CD4-positive, alpha-beta memory T cell (primary cell): ENCODE measurements at regions of chr17 and their contacts with region 1.

Region 1: GRCh38 chr17:72631949-72632684 is 460.4 kb downstream of the SLC39A11 start:
- DNase-seq: no peak
- H3K4me3 ChIP-seq: no peak overlapping the region
- H3K4me3 Mint-ChIP-seq: no peak overlapping the region
- H3K27ac ChIP-seq: no peak overlapping the region
- H3K27ac Mint-ChIP-seq: peak overlapping the region in 1 of 7 donors; percentile 69
- H3K4me1 ChIP-seq: peaks cover 22% of the 10 kb centered on the region
- H3K4me1 Mint-ChIP-seq: peaks cover 19 to 26% (median 20%) of the 10 kb centered on the region in 4 donors
- H3K27me3 ChIP-seq: no peaks in the 10 kb centered on the region
- H3K27me3 Mint-ChIP-seq: no peaks in the 10 kb centered on the region

Region 2: GRCh38 chr17:72592242-72592966 is 39.7 kb before region 1 on chr17:
- CTCF ChIA-PET with region 1: no interaction called
- POLR2A ChIA-PET with region 1: interaction called, 5 read pairs
- intact Hi-C with region 1: loop called (anchors 5 kb)
- DNase-seq: peak; percentile 58 to 75 (median 63)
- H3K4me3 ChIP-seq: peak overlapping the region; percentile 45 to 47
- H3K4me3 Mint-ChIP-seq: peak overlapping the region; percentile 88 to 95 (median 92)
- H3K27ac ChIP-seq: peak overlapping the region; percentile 38
- H3K27ac Mint-ChIP-seq: peak overlapping the region in 6 of 7 donors; percentile 23 to 93 (median 70)
- H3K4me1 ChIP-seq: peaks cover 27% of the 10 kb centered on the region
- H3K4me1 Mint-ChIP-seq: peaks cover 24 to 47% (median 34%) of the 10 kb centered on the region in 4 donors
- H3K27me3 ChIP-seq: peaks cover 4% of the 10 kb centered on the region
- H3K27me3 Mint-ChIP-seq: peaks cover 13 to 31% of the 10 kb centered on the region in 2 donors

Region 3: GRCh38 chr17:72618001-72618509 is 14.1 kb before region 1 on chr17:
- CTCF ChIA-PET with region 1: interaction called, 5 read pairs
- POLR2A ChIA-PET with region 1: interaction called, 10 read pairs
- intact Hi-C with region 1: no loop called
- DNase-seq: peak; percentile 57 to 86 (median 63)
- H3K4me3 ChIP-seq: peak overlapping the region; percentile 11 to 39
- H3K4me3 Mint-ChIP-seq: peak overlapping the region; percentile 72 to 90 (median 82)
- H3K27ac ChIP-seq: peak overlapping the region; percentile 51
- H3K27ac Mint-ChIP-seq: peak overlapping the region; percentile 65 to 91 (median 88)
- H3K4me1 ChIP-seq: peaks cover 24% of the 10 kb centered on the region
- H3K4me1 Mint-ChIP-seq: peaks cover 15 to 37% (median 22%) of the 10 kb centered on the region in 4 donors
- H3K27me3 ChIP-seq: no peaks in the 10 kb centered on the region
- H3K27me3 Mint-ChIP-seq: peaks cover 10 to 11% of the 10 kb centered on the region in 2 donors